Endothelial cell of umbilical vein (primary cell): ENCODE measurements at regions of chr22 and their contacts with region 1.

Region 1: GRCh38 chr22:27880778-27881394 is 38.2 kb downstream of the PITPNB start:
- DNase-seq: peak; percentile 85
- H3K4me3 ChIP-seq: no peak overlapping the region
- H3K27ac ChIP-seq: peak overlapping the region; percentile 22
- H3K4me1 ChIP-seq: peaks cover 15% of the 10 kb centered on the region
- H3K27me3 ChIP-seq: no peaks in the 10 kb centered on the region
- CTCF ChIP-seq: peak; percentile 52 to 54
- POLR2A ChIP-seq: no peak

Region 2: DNA sequence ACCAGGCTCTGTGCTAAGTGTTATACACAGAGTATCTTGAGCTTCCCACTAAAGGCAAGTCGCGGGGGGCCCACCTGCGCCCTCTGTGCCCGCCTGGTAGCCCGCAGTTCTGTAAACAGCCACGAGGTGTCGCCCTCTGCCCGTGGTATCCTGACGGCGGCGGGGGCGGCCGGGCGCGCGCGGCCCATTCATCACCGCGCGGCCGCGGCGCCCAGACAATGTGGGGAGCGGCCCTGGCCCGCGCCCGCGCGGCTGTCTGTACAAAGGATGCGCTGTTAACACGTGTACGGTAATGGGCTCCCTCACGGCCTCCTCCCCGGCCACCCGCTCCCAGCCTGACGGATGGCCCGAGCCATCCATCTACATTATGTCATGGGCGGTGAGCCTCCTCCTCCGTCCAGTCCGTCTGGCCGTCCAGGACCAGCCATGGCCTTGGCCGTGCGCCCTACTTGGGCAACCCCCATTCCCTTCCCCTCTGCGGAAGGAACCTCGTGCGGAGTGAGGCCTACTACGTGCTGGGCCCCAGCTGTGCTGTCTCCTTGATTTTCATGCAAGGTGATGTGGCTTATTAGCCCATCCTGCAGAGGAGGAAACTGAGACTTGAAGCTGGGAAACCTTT is 1124.1 kb before region 1 on chr22:
- CTCF ChIA-PET with region 1: interaction called, 8 read pairs
- POLR2A ChIA-PET with region 1: no interaction called
- dilution Hi-C with region 1: no loop called
- intact Hi-C with region 1: loop called (anchors 2 kb)
- DNase-seq: peak; percentile 46
- H3K4me3 ChIP-seq: peak overlapping the region in 2 of 3 experiments; percentile 13 to 29
- H3K27ac ChIP-seq: no peak overlapping the region
- H3K4me1 ChIP-seq: peaks cover 5% of the 10 kb centered on the region
- H3K27me3 ChIP-seq: no peaks in the 10 kb centered on the region
- CTCF ChIP-seq: peak; percentile 75 to 88
- POLR2A ChIP-seq: no peak

Region 3: GRCh38 chr22:27998511-27999410 is 117.9 kb after region 1 on chr22:
- CTCF ChIA-PET with region 1: interaction called, 11 read pairs
- POLR2A ChIA-PET with region 1: no interaction called
- dilution Hi-C with region 1: no loop called
- intact Hi-C with region 1: loop called (anchors 5 kb)
- DNase-seq: no peak
- H3K4me3 ChIP-seq: no peak overlapping the region
- H3K27ac ChIP-seq: no peak overlapping the region
- H3K4me1 ChIP-seq: no peaks in the 10 kb centered on the region
- H3K27me3 ChIP-seq: no peaks in the 10 kb centered on the region
- CTCF ChIP-seq: no peak
- POLR2A ChIP-seq: no peak

Region 4: DNA sequence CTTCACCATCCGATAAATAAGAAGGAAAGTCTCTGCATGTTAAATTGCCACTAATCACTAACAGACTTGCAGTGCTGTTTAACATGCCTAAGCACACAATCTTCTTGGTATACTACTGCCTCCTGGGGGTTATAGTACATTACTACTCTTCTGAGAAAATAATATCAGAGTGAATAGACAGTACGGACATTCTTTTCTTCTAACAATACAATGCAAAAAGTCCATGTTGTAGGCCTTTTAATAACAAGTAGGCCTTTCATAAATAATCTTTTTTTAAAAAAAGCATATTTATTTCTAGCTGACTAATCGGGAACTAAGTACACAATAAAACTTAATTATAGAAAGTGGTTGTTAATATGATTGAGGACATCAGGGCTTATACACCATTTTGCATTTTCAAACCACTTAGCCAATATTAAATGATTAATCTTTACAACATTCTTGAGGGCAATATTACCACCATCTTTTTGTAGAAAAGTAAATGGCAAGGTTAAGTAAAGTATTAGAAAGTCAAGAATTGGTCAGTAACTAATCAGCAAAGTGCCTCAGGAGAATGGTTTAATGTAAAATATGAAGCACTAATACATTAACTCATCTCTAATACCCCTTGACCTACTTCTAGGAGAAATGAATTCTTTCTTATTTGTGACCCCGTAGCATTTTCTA is 714.0 kb after region 1 on chr22:
- CTCF ChIA-PET with region 1: interaction called, 4 read pairs
- POLR2A ChIA-PET with region 1: no interaction called
- dilution Hi-C with region 1: no loop called
- intact Hi-C with region 1: loop called (anchors 10 kb)
- DNase-seq: peak; percentile 69
- H3K4me3 ChIP-seq: no peak overlapping the region
- H3K27ac ChIP-seq: no peak overlapping the region
- H3K4me1 ChIP-seq: peaks cover 4% of the 10 kb centered on the region
- H3K27me3 ChIP-seq: no peaks in the 10 kb centered on the region
- CTCF ChIP-seq: peak; percentile 46 to 53
- POLR2A ChIP-seq: no peak